ENCODE measurements at regions of chr18 and their contacts with region 1.

Region 1: DNA sequence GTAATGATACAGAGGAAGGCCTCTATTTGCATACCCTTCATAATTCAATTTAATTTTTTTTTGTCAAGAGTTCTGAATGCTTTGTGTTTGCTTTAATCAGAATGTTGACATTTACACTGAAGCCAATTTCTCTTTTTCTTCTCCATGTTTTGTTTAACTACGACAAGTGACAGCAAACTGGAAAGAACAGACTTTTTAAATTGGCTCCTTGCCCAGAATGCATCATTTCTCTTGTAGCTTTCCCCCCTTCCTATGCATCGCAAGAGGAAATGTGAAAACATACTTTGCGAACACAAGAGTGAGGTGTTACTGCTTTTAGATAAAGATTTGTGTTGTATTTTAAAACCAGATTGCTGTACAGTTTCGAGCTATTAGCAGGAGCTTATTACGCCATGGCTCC is 955.2 kb upstream of the CELF4 start:
- DNase-seq: no peak

Region 2: DNA sequence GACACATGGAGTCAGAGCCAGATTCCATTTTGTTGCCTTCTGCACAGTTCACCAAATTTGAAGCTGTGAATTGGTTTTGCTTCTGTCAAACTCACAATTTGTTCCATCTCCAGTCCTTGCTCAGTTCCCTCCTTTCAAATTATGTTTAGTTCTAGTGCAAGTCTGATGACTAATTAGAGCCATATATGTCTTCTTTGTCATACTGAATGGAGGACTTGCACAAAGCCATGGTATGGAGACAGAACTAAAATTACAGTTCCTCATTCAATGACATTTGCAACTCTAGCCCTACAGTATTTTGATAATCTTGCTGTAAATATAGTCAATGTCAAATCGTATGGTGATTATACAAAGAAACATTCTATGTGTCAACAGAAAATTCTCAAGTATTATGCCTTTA is 18.2 kb before region 1 on chr18:
- intact Hi-C with region 1: loop called in 1 of 2 experiments (anchors 1 kb)
- DNase-seq: no peak

Region 3: GRCh38 chr18:38851526-38851925 is 330.7 kb after region 1 on chr18:
- intact Hi-C with region 1: no loop called
- DNase-seq: no peak